Natural killer cell (primary cell): ENCODE measurements at regions of chr11 and their contacts with region 1.

Region 1: DNA sequence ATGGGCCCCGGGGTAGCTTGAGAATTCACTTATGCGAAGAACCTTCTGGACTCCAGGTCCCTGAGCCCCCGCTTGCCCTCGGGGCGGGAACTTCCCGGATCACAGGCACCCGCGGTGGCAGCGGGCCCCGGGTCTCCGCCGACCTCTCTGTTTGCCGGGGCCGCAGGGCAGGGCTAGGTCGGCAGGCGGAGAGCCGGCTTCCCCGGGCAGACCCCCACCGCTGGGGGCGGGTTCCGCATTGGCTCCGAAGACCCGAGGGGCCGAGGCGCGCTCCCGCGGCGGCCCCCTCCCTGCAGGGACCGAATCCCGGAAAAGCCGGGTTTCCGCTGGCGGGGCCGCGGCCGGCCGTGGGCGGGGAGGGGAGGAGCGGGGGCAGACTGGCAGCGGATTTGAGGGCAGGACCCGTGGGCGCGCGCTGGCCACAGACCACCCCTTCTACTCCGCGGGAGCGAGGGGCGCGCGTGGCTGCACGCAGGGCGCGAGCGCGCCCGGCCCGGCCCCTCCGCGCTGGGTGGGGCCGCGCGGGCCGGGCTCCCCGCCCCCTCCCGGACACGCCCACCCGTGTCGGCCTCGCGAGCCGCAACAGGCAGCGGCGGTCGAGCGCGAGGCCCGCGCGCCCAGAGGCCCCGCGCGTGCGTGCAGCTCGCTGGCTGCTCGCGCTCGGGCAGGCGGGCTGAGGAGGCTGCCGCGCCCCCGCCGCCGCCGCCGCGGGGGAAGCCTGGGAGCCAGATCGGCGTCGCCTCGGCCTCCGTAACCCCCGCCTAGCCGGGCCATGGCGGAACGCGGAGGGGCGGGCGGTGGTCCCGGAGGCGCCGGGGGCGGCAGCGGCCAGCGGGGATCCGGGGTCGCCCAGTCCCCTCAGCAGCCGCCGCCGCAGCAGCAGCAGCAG is at the start of gene PACS1:
- DNase-seq: peak; percentile 78 to 91
- ATAC-seq: peak; percentile 70 to 88 (median 80)
- H3K4me3 ChIP-seq: peak within 1 kb of the TSS; percentile 77
- H3K4me3 Mint-ChIP-seq: peak within 1 kb of the TSS; percentile 94
- H3K27ac ChIP-seq: peak within 1 kb of the TSS; percentile 88
- H3K27ac Mint-ChIP-seq: peak within 1 kb of the TSS; percentile 93 to 95
- H3K4me1 ChIP-seq: peaks cover 39% of the 10 kb centered on the region
- H3K4me1 Mint-ChIP-seq: peaks cover 58 to 62% of the 10 kb centered on the region in 2 donors
- H3K27me3 ChIP-seq: no peaks in the 10 kb centered on the region
- H3K27me3 Mint-ChIP-seq: no peaks in the 10 kb centered on the region
- CTCF ChIP-seq: no peak
- total RNA-seq, gene PACS1: 176 to 204 (median 186) TPM

Region 2: GRCh38 chr11:66051766-66052663 is 17.9 kb before region 1 on chr11 and contains the start of gene SF3B2:
- intact Hi-C with region 1: loop called (anchors 1 kb)
- DNase-seq: peak; percentile 90 to 98
- ATAC-seq: peak; percentile 93 to 98 (median 96)
- H3K4me3 ChIP-seq: peak within 1 kb of the TSS; percentile 97
- H3K4me3 Mint-ChIP-seq: peak within 1 kb of the TSS; percentile 100
- H3K27ac ChIP-seq: peak within 1 kb of the TSS; percentile 69
- H3K27ac Mint-ChIP-seq: peak within 1 kb of the TSS; percentile 98
- H3K4me1 ChIP-seq: peaks cover 23% of the 10 kb centered on the region
- H3K4me1 Mint-ChIP-seq: peaks cover 27 to 34% of the 10 kb centered on the region in 2 donors
- H3K27me3 ChIP-seq: peaks cover 3% of the 10 kb centered on the region
- H3K27me3 Mint-ChIP-seq: peaks cover 0 to 11% of the 10 kb centered on the region in 2 donors
- CTCF ChIP-seq: no peak
- total RNA-seq, gene SF3B2: 249 to 269 (median 253) TPM

Region 3: DNA sequence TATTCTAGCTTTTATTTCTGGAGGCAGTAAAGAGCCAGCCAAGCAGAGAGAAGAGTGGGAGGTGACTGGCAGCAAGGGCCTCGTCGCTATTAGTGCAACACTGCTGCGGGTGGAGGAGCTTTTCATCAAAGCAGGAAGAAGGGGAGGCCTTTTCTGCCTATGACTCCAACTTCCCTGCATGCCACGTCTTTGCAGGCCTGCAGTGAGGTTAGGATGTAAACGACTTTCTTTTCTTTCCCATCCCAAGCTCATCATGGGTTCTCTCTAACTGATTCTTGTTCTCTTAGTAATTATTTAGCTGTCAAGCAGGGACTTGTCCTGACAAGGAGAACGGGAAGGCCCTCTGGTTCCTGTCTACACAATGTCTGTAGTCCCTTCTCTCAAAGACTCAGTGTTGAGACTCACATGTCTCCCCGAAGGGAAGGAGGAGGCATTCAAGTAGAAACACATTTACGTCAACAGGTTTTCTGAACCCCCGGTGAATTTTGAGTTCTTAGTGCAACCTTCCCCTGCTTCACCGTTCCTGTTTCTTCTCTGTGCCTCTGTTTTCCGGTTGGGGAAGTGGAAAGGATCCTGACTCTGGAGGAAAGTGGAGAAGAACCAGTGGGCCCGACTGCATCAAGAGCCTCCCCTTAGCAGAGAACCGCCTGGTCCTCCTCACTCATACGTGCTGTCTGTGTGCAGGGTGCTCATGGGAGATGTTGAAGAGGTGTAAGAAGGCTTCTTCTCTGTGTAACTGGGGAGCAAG is 57.0 kb after region 1 on chr11:
- intact Hi-C with region 1: loop called (anchors 2 kb)
- DNase-seq: peak; percentile 41 to 78
- ATAC-seq: peak; percentile 88 to 98 (median 93)
- H3K4me3 ChIP-seq: no peak overlapping the region
- H3K4me3 Mint-ChIP-seq: peak overlapping the region; percentile 78
- H3K27ac ChIP-seq: peak overlapping the region; percentile 69
- H3K27ac Mint-ChIP-seq: peak overlapping the region; percentile 93 to 97
- H3K4me1 ChIP-seq: peaks cover 20% of the 10 kb centered on the region
- H3K4me1 Mint-ChIP-seq: peaks cover 37 to 63% of the 10 kb centered on the region in 2 donors
- H3K27me3 ChIP-seq: no peaks in the 10 kb centered on the region
- H3K27me3 Mint-ChIP-seq: no peaks in the 10 kb centered on the region
- CTCF ChIP-seq: no peak

Region 4: GRCh38 chr11:66136752-66137123 is 66.8 kb after region 1 on chr11:
- intact Hi-C with region 1: loop called (anchors 2 kb)
- DNase-seq: no peak
- ATAC-seq: no peak
- H3K4me3 ChIP-seq: no peak overlapping the region
- H3K4me3 Mint-ChIP-seq: no peak overlapping the region
- H3K27ac ChIP-seq: no peak overlapping the region
- H3K27ac Mint-ChIP-seq: peak overlapping the region; percentile 3 to 78
- H3K4me1 ChIP-seq: no peaks in the 10 kb centered on the region
- H3K4me1 Mint-ChIP-seq: peaks cover 15 to 26% of the 10 kb centered on the region in 2 donors
- H3K27me3 ChIP-seq: no peaks in the 10 kb centered on the region
- H3K27me3 Mint-ChIP-seq: no peaks in the 10 kb centered on the region
- CTCF ChIP-seq: no peak

Region 5: GRCh38 chr11:66192181-66192863 is 122.4 kb after region 1 on chr11:
- intact Hi-C with region 1: no loop called
- DNase-seq: no peak
- ATAC-seq: no peak
- H3K4me3 ChIP-seq: no peak overlapping the region
- H3K4me3 Mint-ChIP-seq: no peak overlapping the region
- H3K27ac ChIP-seq: no peak overlapping the region
- H3K27ac Mint-ChIP-seq: no peak overlapping the region
- H3K4me1 ChIP-seq: no peaks in the 10 kb centered on the region
- H3K4me1 Mint-ChIP-seq: peaks cover 38 to 39% of the 10 kb centered on the region in 2 donors
- H3K27me3 ChIP-seq: no peaks in the 10 kb centered on the region
- H3K27me3 Mint-ChIP-seq: no peaks in the 10 kb centered on the region
- CTCF ChIP-seq: no peak